ENCODE measurements at regions of chr11 and their contacts with region 1.

Region 1: GRCh38 chr11:63614136-63614664 is at the start of gene PLAAT3:
- DNase-seq: peak; percentile 47 to 88 (median 76)
- H3K4me3 ChIP-seq: peak within 1 kb of the TSS; percentile 59 to 97 (median 87)
- H3K27ac ChIP-seq: peak within 1 kb of the TSS; percentile 74 to 100 (median 97)
- H3K27me3 ChIP-seq: no peaks in the 10 kb centered on the region
- CTCF ChIP-seq: peak in 21 of 56 donors; percentile 10 to 55 (median 24)
- total RNA-seq, gene PLAAT3: 68.4 to 465 (median 140) TPM

Region 2: GRCh38 chr11:63536669-63537292 is 77.4 kb before region 1 on chr11 and contains the start of gene PLAAT4:
- intact Hi-C with region 1: loop called in 1 of 2 experiments (anchors 5 kb)
- DNase-seq: peak in 7 of 10 donors; percentile 42 to 66 (median 60)
- H3K4me3 ChIP-seq: peak within 1 kb of the TSS; percentile 30 to 70 (median 52)
- H3K27ac ChIP-seq: peak within 1 kb of the TSS; percentile 89 to 100 (median 98)
- H3K27me3 ChIP-seq: no peaks in the 10 kb centered on the region
- CTCF ChIP-seq: peak in 25 of 56 donors; percentile 10 to 43 (median 27)
- total RNA-seq, gene PLAAT4: 11.2 to 117 (median 25.4) TPM

Region 3: GRCh38 chr11:63573881-63574855 is 40.0 kb before region 1 on chr11:
- intact Hi-C with region 1: loop called in 1 of 2 experiments (anchors 5 kb)
- DNase-seq: peak in 1 of 10 donors; percentile 43
- H3K4me3 ChIP-seq: peak overlapping the region in 29 of 59 donors; percentile 2 to 41 (median 19)
- H3K27ac ChIP-seq: peak overlapping the region; percentile 60 to 94 (median 87)
- H3K27me3 ChIP-seq: no peaks in the 10 kb centered on the region
- CTCF ChIP-seq: peak in 16 of 56 donors; percentile 10 to 56 (median 18)

Measured in dorsolateral prefrontal cortex (tissue), 120 donors.